HCT116 (cell line): ENCODE measurements at regions of chr5 and their contacts with region 1.

Region 1: GRCh38 chr5:95283761-95284415 is 1.0 kb downstream of the MCTP1 start:
- DNase-seq: no peak
- ATAC-seq: peak; percentile 63
- H3K4me3 ChIP-seq: peak overlapping the region; percentile 43 to 57
- H3K27ac ChIP-seq: no peak overlapping the region; the same call in 1 of the 2 replicates
- H3K4me1 ChIP-seq: peaks cover 5 to 25% of the 10 kb centered on the region in 2 experiments; a peak in 2 of 4 replicates
- H3K27me3 ChIP-seq: no peaks in the 10 kb centered on the region
- CTCF ChIP-seq: peak; percentile 12 to 33 (median 17); a peak in 3 of 6 replicates
- POLR2A ChIP-seq: no peak
- RAD21 ChIP-seq: peak; percentile 34; the same call in 1 of the 2 replicates

Region 2: GRCh38 chr5:94857111-94857510 is 426.8 kb before region 1 on chr5:
- CTCF ChIA-PET with region 1: no interaction called
- POLR2A ChIA-PET with region 1: no interaction called
- RAD21 ChIA-PET with region 1: no interaction called
- intact Hi-C with region 1: no loop called
- DNase-seq: no peak
- ATAC-seq: no peak
- H3K4me3 ChIP-seq: no peak overlapping the region
- H3K27ac ChIP-seq: no peak overlapping the region
- H3K4me1 ChIP-seq: no peaks in the 10 kb centered on the region
- H3K27me3 ChIP-seq: no peaks in the 10 kb centered on the region
- CTCF ChIP-seq: no peak
- POLR2A ChIP-seq: no peak
- RAD21 ChIP-seq: no peak

Region 3: GRCh38 chr5:95272316-95272929 is 11.5 kb before region 1 on chr5:
- CTCF ChIA-PET with region 1: no interaction called
- POLR2A ChIA-PET with region 1: no interaction called
- RAD21 ChIA-PET with region 1: no interaction called
- intact Hi-C with region 1: no loop called
- DNase-seq: no peak
- ATAC-seq: no peak
- H3K4me3 ChIP-seq: no peak overlapping the region
- H3K27ac ChIP-seq: no peak overlapping the region
- H3K4me1 ChIP-seq: no peaks in the 10 kb centered on the region
- H3K27me3 ChIP-seq: no peaks in the 10 kb centered on the region
- CTCF ChIP-seq: no peak
- POLR2A ChIP-seq: no peak
- RAD21 ChIP-seq: no peak

Region 4: GRCh38 chr5:95554647-95555548 is 271.0 kb after region 1 on chr5 and contains the starts of genes ARSK and SKIC3:
- CTCF ChIA-PET with region 1: no interaction called
- POLR2A ChIA-PET with region 1: no interaction called
- RAD21 ChIA-PET with region 1: no interaction called
- intact Hi-C with region 1: loop called (anchors 2 kb)
- DNase-seq: peak; percentile 98
- ATAC-seq: peak; percentile 92
- H3K4me3 ChIP-seq: peak within 1 kb of the TSS; percentile 87 to 88
- H3K27ac ChIP-seq: peak within 1 kb of the TSS; percentile 63
- H3K4me1 ChIP-seq: peaks cover 4 to 16% of the 10 kb centered on the region in 2 experiments; a peak in 3 of 4 replicates
- H3K27me3 ChIP-seq: no peaks in the 10 kb centered on the region
- CTCF ChIP-seq: 0 out of 6 replicates have a peak, but pooled peaks of 1 of the 3 experiments have one; percentile 11
- POLR2A ChIP-seq: peak; percentile 92
- RAD21 ChIP-seq: no peak
- total RNA-seq, gene ARSK: 4.6 TPM
- total RNA-seq, gene SKIC3: 35.1 TPM